Dendritic cell treated with granulocyte-macrophage colony-stimulating factor and Interleukin-4, amounts not matched to agents 40 ng/mL and 50 ng/mL, for 4 days (primary cell): ENCODE measurements at regions of chr9 and their contacts with region 1.

Region 1: DNA sequence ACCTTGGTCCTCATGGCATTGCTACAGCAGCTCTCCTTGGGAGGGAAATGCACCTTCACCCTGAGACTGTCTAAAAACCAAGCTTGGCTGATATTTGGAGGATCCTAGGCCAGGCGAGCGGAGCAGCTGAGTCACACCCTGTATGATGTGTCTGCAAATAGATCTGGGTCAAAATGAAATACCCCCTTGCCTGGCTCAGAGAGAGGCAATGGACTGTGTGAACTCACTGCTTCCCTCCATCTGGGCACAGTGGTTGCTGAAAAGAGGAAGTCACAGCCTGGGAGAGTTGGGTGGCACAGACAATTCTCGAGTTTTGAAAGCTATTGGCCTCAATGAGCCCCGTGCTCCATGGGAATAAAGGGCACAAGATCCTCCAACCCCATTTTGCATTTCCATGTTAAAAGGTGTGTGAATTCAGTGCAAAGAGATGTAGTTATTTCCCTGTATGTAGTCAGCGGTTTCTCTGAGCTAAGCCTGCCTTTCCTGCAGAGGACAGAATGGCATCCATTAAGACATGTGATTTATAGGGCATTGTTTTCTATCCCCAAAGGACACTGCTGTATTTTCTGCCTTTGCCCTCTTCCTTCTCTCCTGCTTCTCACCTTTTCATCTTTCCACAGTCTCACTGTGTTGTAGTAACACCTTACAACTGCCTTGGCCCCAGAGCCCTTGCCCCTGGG is 177.2 kb downstream of the GADD45G start:
- H3K4me3 Mint-ChIP-seq: no peak overlapping the region
- H3K27ac Mint-ChIP-seq: peak overlapping the region; percentile 22
- H3K4me1 Mint-ChIP-seq: peaks cover 35% of the 10 kb centered on the region
- H3K27me3 Mint-ChIP-seq: peaks cover 36% of the 10 kb centered on the region

Region 2: GRCh38 chr9:89623925-89624420 is 158.0 kb before region 1 on chr9:
- intact Hi-C with region 1: loop called (anchors 10 kb)
- H3K4me3 Mint-ChIP-seq: no peak overlapping the region
- H3K27ac Mint-ChIP-seq: peak overlapping the region; percentile 81
- H3K4me1 Mint-ChIP-seq: peaks cover 44% of the 10 kb centered on the region
- H3K27me3 Mint-ChIP-seq: peaks cover 42% of the 10 kb centered on the region

Region 3: DNA sequence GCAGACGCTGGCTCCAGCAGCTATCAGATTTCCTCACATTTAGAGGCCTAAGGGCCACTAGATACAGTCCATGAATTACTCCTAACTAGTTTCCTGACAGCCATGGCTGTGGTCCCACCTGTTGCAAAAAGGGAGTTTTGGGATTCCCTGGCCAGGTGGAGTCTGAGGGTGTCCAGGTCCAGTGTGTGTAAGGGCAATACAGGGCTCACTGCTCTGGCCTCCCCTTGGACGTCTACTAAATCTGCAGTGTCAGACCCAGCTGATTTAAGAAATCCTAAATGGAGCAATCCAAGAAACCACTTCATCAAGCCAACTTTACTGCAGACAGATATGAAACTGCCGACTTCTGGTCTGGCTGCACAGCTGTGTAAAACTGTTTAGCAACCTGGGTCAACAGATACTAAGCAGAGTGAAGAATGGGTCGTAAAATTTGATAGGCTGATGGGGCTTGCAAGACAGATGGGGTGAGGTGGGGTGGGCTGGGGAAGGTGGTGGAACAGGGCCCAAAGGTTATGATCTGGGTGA is 60.7 kb before region 1 on chr9:
- intact Hi-C with region 1: no loop called
- H3K4me3 Mint-ChIP-seq: no peak overlapping the region
- H3K27ac Mint-ChIP-seq: peak overlapping the region; percentile 66
- H3K4me1 Mint-ChIP-seq: peaks cover 64% of the 10 kb centered on the region
- H3K27me3 Mint-ChIP-seq: no peaks in the 10 kb centered on the region

Region 4: GRCh38 chr9:89740722-89741121 is 41.3 kb before region 1 on chr9:
- intact Hi-C with region 1: loop called (anchors 5 kb)
- H3K4me3 Mint-ChIP-seq: no peak overlapping the region
- H3K27ac Mint-ChIP-seq: peak overlapping the region; percentile 85
- H3K4me1 Mint-ChIP-seq: peaks cover 34% of the 10 kb centered on the region
- H3K27me3 Mint-ChIP-seq: peaks cover 4% of the 10 kb centered on the region

Region 5: DNA sequence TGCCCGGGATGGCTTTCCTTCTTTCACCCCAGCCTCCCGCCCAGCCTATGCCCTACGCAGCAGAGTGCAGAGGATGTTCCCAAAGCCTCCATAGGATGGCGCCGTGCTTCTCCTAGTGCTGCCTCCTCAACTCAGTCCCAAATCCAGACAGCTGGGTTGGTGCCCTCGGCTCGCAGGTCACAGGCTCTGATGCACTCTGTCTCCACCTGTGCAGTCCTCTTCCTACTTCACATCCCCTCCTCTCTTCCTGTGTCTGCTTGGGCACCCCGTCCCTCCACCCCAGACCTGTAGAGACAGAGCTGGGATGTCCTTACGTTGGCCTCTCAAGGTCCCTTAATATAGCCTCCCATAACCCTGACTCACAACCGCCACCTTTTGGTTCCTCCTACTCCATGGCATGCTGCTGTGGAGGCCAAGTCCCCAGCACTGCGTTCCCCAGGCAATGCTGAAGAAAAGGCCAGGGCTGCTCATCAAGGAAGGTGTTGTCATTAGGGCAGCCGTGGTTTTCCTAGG is 137.2 kb after region 1 on chr9:
- intact Hi-C with region 1: no loop called
- H3K4me3 Mint-ChIP-seq: no peak overlapping the region
- H3K27ac Mint-ChIP-seq: no peak overlapping the region
- H3K4me1 Mint-ChIP-seq: peaks cover 11% of the 10 kb centered on the region
- H3K27me3 Mint-ChIP-seq: peaks cover 20% of the 10 kb centered on the region